Common myeloid progenitor, CD34-positive (primary cell): ENCODE measurements at regions of chr12 and their contacts with region 1.

Region 1: DNA sequence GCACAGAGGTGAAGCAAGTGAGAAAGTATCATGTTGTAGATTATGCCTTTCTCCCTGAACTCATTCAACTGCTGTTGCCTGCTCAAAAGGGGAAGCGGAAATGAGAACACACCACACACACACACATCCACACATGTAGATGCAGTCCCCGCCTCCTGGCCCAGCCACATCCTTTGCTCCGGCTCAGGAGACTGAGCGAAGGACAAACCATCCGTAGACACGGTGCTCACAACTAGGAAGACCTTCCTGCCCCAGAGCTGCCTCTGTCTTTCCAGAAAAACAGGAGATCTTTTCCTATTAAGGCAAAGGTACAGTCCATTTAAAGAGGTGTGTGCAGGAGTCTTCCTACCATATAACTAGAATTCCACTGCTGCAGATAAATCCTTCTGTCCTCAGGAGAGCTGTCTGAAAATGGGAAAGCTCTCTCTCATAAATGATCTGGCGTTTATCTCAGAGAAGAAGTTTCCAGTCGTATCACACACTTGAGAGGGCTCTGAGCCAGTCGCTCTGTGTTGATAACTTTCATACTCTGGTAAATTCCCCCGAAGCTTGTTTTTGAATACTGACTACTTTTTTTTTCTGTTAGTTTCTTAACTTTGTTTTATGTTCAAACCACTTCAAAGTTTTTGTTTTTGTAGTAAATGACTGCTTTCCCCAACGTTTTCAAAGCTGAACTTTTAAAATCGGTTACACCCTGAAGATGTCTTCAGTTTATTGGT is at the start of gene TESPA1:
- DNase-seq: peak; percentile 93 to 97 (median 95)
- H3K4me3 ChIP-seq: peak within 1 kb of the TSS; percentile 33 to 88 (median 75)
- H3K27ac ChIP-seq: peak within 1 kb of the TSS; percentile 69 to 79
- H3K4me1 ChIP-seq: peaks cover 58 to 88% (median 65%) of the 10 kb centered on the region in 4 experiments
- H3K27me3 ChIP-seq: no peaks in the 10 kb centered on the region

Region 2: GRCh38 chr12:54967461-54967860 is 17.4 kb before region 1 on chr12:
- CTCF ChIA-PET with region 1: interaction called, 17 read pairs
- POLR2A ChIA-PET with region 1: interaction called, 4 read pairs
- DNase-seq: peak; percentile 60 to 86 (median 82)
- H3K4me3 ChIP-seq: peak overlapping the region in 4 of 7 experiments; percentile 1 to 66 (median 20)
- H3K27ac ChIP-seq: peak overlapping the region; percentile 41 to 77
- H3K4me1 ChIP-seq: peaks cover 19 to 60% (median 30%) of the 10 kb centered on the region in 4 experiments
- H3K27me3 ChIP-seq: no peaks in the 10 kb centered on the region